Heart right ventricle (tissue), 16 donors: ENCODE measurements at regions of chr17 and their contacts with region 1.

Region 1: DNA sequence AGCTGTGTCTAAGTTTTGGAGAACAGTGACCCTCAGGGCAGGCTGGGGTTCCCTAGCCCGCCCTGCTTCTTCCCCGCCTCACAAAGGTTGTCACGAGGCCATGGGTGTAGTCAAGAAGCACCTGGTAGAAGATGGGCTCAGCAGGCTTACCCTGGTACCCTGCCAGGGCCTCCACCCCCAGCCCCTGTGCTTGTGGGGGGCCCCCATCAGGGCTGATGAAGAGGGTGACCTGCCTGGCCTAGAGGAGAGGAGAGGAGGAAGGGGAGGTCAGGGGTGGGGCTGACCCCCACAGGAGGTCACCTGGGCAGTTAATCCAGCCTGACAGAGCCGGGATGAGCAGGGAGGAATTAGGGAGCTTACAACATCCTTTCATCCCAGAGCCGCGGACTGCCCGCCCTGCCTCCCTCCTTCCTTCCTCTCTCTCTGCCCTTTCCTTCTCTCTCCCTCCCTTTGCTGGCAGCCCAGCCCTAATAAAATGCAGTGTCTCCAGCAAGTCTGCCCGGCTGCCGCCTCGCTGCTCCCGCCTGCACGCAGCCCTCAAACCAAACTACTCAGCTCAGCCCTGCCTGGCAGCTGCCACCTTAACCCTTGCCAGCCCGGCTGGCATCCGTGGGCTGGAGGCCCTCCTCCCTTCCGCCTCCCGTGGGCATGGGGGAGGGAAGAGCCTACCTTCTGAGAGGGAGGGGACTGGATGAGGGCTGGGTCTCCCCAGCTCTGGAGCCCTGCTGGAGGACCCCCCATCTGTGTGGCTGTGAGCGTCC is 7.2 kb downstream of the DLX3 start:
- DNase-seq: no peak
- ATAC-seq: no peak
- H3K4me3 ChIP-seq: no peak overlapping the region
- H3K27ac ChIP-seq: no peak overlapping the region
- H3K4me1 ChIP-seq: peaks cover 0 to 6% (median 0%) of the 10 kb centered on the region in 9 donors
- H3K27me3 ChIP-seq: peaks cover 0 to 97% (median 88%) of the 10 kb centered on the region in 7 donors
- CTCF ChIP-seq: no peak

Region 2: GRCh38 chr17:49873466-49873865 is 114.4 kb before region 1 on chr17:
- intact Hi-C with region 1: loop called in 1 of 10 experiments (anchors 5 kb)
- DNase-seq: no peak
- ATAC-seq: no peak
- H3K4me3 ChIP-seq: no peak overlapping the region
- H3K27ac ChIP-seq: no peak overlapping the region
- H3K4me1 ChIP-seq: no peaks in the 10 kb centered on the region
- H3K27me3 ChIP-seq: peaks cover 0 to 30% (median 11%) of the 10 kb centered on the region in 7 donors
- CTCF ChIP-seq: no peak

Region 3: DNA sequence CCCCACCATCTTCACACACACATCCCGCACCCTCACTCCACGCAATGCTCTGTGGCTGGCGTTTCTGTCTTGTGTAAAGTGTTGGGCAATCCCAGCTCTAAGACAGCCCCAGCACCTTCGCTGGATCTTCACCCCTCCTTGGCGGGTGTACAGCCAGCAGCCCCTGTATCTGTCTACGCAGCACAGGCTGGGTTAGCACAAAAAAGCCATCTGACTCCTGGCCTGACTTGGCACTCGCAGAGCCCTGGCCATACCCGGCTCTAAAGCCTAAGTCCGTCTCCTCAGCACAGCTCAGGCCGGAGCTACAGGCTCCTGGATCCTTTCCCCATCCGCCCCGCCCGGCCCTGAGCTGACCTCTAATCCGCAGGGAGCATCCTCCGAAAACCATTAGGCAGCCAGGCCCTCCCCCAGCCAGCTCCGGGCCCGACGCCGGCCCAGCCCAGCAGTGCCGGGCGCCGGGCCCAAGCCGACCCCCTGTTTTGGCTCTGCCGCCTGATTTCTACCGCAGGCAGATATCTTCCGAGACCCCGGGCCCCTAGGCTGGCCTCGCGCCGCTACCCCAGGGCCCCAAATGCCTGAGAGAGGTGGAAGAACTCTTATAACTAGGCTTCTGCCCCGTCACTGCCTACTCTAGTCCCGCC is 97.6 kb before region 1 on chr17:
- intact Hi-C with region 1: loop called in 1 of 10 experiments (anchors 5 kb)
- DNase-seq: peak; percentile 17 to 59
- ATAC-seq: peak in 7 of 8 donors; percentile 29 to 76 (median 58)
- H3K4me3 ChIP-seq: no peak overlapping the region
- H3K27ac ChIP-seq: no peak overlapping the region
- H3K4me1 ChIP-seq: peaks cover 0 to 9% (median 0%) of the 10 kb centered on the region in 9 donors
- H3K27me3 ChIP-seq: peaks cover 8 to 90% (median 81%) of the 10 kb centered on the region in 7 donors
- CTCF ChIP-seq: no peak

Region 4: DNA sequence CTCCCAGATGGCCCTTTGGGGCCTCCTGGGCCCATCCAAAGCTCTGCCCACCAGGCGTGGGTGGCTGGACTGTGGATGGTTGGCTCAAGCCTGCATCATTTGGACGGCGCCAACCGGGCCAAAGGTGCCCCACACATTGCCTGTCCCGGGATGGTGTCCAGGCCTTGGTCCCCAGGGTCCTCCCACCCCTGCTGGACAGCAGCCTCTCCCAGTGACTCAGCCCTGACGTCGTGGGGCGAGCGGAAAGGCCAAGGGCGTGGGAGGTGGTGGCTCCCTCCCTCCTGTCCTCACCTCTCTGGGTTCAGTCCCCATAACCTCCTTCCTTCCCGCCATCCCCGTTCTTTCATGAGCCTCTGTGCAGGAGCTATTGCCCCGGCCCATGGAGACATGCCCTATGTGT is 61.0 kb before region 1 on chr17:
- intact Hi-C with region 1: loop called in 1 of 10 experiments (anchors 10 kb)
- DNase-seq: peak; percentile 64 to 75
- ATAC-seq: peak; percentile 64 to 88 (median 84)
- H3K4me3 ChIP-seq: no peak overlapping the region
- H3K27ac ChIP-seq: no peak overlapping the region
- H3K4me1 ChIP-seq: peaks cover 0 to 18% (median 3%) of the 10 kb centered on the region in 9 donors
- H3K27me3 ChIP-seq: peaks cover 0 to 53% (median 35%) of the 10 kb centered on the region in 7 donors
- CTCF ChIP-seq: no peak

Region 5: DNA sequence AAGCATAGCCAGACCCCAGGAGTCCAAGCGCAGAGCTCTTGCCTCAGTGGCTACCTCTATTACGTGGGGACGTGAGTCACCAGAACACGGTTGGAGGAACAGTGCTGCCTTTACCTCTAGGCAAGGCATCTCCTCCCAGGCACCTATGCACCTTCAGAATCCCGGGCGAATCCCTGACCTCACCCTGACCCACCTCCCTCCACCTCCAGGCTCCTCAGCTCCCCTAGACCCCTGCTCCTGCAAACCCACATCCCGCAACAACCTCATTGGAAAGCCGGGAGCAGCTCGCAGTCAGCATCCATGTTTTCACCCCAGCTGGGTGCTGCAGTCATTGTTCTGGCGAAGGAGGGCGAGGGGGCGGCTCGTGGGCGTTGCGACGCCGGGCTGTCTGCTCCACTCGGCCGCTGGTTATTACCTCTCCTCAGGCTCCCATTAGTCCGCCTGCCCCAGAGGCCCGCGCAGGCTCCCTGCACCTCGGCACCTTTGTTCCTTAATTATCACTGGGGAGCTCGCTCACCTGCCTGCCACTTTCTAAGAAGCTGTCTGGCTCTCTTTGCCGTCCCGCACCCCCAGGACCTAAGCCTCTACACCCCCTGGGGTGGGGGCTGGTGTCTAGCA is 43.5 kb before region 1 on chr17:
- intact Hi-C with region 1: no loop called
- DNase-seq: no peak
- ATAC-seq: no peak
- H3K4me3 ChIP-seq: no peak overlapping the region
- H3K27ac ChIP-seq: no peak overlapping the region
- H3K4me1 ChIP-seq: no peaks in the 10 kb centered on the region
- H3K27me3 ChIP-seq: peaks cover 0 to 90% (median 86%) of the 10 kb centered on the region in 7 donors
- CTCF ChIP-seq: no peak

Region 6: GRCh38 chr17:49968380-49969133 is 19.3 kb before region 1 on chr17:
- intact Hi-C with region 1: no loop called
- DNase-seq: peak; percentile 41 to 64
- ATAC-seq: peak; percentile 38 to 83 (median 67)
- H3K4me3 ChIP-seq: peak overlapping the region; percentile 19 to 58 (median 44)
- H3K27ac ChIP-seq: no peak overlapping the region
- H3K4me1 ChIP-seq: peaks cover 18 to 58% (median 38%) of the 10 kb centered on the region in 9 donors
- H3K27me3 ChIP-seq: peaks cover 67 to 100% (median 100%) of the 10 kb centered on the region in 7 donors
- CTCF ChIP-seq: no peak

Region 7: DNA sequence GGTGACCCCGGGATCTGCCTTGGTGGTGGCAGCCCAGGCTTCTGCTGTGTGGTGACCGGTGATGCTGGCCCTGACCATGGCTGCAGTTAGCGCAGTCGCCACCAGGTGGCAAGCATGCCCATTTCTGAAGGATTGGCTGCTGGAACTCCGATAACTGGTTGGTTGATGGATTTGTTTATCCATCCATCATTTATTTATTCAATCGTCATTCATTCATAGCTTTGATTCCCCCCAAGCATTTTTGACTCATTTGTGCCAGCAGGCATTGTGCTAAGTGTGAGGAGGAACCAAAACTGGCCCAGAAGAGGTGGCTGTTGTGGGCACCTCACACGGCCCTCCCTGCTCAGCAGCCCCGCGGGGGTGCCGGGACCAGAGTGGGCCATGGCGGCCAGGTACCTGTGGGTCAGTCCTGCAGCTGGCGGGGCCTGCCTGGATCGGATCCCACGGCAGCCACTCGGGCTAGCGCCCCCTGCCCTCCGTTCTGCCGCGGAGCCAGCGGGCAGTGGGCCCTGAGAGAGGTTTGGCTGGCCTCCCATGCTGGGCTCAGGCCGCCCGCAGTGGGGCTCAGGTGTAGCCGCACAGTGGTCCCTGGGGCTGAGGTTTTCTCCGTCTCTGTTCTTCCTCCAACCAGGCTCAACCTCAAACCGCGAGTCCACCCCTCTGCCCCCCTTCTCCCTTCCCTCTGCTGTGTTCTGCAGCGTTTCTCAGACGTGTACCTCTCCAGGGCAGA is 39.2 kb after region 1 on chr17:
- intact Hi-C with region 1: no loop called
- DNase-seq: peak; percentile 79 to 87
- ATAC-seq: peak; percentile 75 to 89 (median 82)
- H3K4me3 ChIP-seq: peak overlapping the region in 5 of 10 donors; percentile 13 to 37 (median 28)
- H3K27ac ChIP-seq: peak overlapping the region in 1 of 10 donors; percentile 36
- H3K4me1 ChIP-seq: peaks cover 5 to 33% (median 18%) of the 10 kb centered on the region in 9 donors
- H3K27me3 ChIP-seq: peaks cover 0 to 20% (median 6%) of the 10 kb centered on the region in 7 donors
- CTCF ChIP-seq: peak; percentile 89 to 98 (median 94)

Region 8: GRCh38 chr17:50047488-50048126 is 59.7 kb after region 1 on chr17:
- intact Hi-C with region 1: no loop called
- DNase-seq: no peak
- ATAC-seq: peak in 2 of 8 donors; percentile 32 to 34
- H3K4me3 ChIP-seq: no peak overlapping the region
- H3K27ac ChIP-seq: peak overlapping the region in 1 of 10 donors; percentile 31
- H3K4me1 ChIP-seq: peaks cover 7 to 34% (median 17%) of the 10 kb centered on the region in 9 donors
- H3K27me3 ChIP-seq: no peaks in the 10 kb centered on the region
- CTCF ChIP-seq: no peak